ENCODE measurements at regions of chr2 and their contacts with region 1.

Region 1: GRCh38 chr2:150681120-150681804 is 193.8 kb upstream of the RND3 start:
- DNase-seq: no peak
- ATAC-seq: peak in 2 of 4 donors; percentile 60 to 66
- H3K4me3 ChIP-seq: no peak overlapping the region
- H3K27ac ChIP-seq: no peak overlapping the region
- H3K4me1 ChIP-seq: no peaks in the 10 kb centered on the region
- H3K27me3 ChIP-seq: no peaks in the 10 kb centered on the region
- CTCF ChIP-seq: no peak

Region 2: GRCh38 chr2:149799013-149799705 is 882.1 kb before region 1 on chr2:
- intact Hi-C with region 1: loop called in 1 of 3 experiments (anchors 5 kb)
- DNase-seq: no peak
- ATAC-seq: peak in 3 of 4 donors; percentile 57 to 74 (median 62)
- H3K4me3 ChIP-seq: no peak overlapping the region
- H3K27ac ChIP-seq: no peak overlapping the region
- H3K4me1 ChIP-seq: no peaks in the 10 kb centered on the region
- H3K27me3 ChIP-seq: no peaks in the 10 kb centered on the region
- CTCF ChIP-seq: no peak

Region 3: DNA sequence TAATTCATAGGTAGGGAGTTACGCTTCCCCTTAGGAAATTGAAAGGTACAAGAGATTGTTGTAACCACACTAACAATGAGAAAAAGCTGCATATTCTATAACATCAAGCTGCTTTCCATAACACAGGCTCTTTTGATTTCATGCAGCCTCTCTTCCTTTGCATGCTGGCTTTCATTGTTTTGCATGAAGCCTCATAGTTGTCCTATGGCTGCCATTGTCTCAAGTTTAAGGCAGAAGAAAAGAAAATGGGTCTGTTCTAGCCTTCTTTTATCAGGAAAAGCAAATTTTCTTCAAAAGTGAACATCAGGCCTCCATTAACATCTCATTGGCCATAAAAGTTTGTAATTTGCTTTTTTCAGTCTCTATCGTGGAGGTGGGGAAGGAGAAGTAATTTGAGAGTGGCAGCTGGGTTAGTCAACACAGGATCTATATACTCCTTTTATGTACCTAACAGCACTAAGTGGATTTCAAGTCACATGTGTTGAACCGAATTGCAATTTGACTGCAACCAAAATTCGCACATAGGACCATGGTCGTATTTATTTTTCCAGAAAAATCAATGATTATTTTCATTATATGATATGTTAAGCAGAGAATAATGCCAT is 54.7 kb after region 1 on chr2:
- intact Hi-C with region 1: no loop called
- DNase-seq: no peak
- ATAC-seq: no peak
- H3K4me3 ChIP-seq: no peak overlapping the region
- H3K27ac ChIP-seq: no peak overlapping the region
- H3K4me1 ChIP-seq: no peaks in the 10 kb centered on the region
- H3K27me3 ChIP-seq: no peaks in the 10 kb centered on the region
- CTCF ChIP-seq: no peak

Region 4: DNA sequence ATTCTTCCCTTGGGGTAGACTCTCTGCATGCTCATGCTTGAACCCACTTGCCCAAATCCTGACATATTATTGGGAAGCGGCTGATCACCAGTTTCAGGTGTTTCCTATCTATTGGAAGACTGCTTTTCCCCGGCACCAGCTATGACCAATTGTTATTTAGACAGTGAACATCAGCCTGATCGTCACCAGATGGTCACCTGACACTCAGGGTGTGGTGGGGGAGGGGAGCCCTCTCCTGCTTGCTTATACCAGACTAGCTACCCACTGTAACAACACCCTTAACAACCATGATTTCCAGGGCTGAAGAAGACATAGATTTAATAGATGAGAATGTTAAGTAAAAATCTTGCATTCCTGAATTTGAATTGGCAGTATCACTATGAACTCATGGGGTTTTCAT is 536.1 kb after region 1 on chr2:
- intact Hi-C with region 1: no loop called
- DNase-seq: no peak
- ATAC-seq: no peak
- H3K4me3 ChIP-seq: no peak overlapping the region
- H3K27ac ChIP-seq: no peak overlapping the region
- H3K4me1 ChIP-seq: no peaks in the 10 kb centered on the region
- H3K27me3 ChIP-seq: no peaks in the 10 kb centered on the region
- CTCF ChIP-seq: no peak

Measured in pancreas (tissue), 10 donors.